Endothelial cell of umbilical vein (primary cell): ENCODE measurements at regions of chr20 and their contacts with region 1.

Region 1: DNA sequence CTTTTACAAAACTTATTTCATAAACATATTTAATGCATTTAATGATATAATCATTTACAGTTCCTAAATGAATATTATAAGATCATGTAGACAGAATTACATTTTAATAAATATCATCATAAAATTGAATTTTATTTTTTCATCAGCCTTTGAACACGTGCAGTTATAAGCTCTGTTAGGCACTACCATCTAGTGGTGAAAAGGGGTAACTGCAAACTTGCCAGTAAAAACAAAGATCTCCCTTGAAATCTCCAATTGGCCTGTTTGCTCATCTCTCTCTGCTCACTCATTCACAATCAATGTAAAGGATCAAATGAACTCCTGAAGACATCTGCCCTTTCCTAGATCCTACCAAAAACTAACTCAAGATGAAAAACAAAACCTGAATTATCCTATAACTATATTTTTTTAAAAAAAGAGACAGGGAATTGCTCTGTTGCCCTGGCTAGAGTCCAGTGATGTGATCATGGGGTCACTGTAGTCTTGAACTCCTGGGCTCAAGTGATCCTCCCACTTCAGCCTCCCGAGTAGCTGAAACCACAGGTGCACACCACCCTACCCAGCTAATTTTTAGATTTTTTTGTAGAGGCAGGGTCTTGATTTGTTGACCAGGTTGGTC is 31.7 kb downstream of the SAMHD1 start:
- DNase-seq: peak; percentile 67
- H3K4me3 ChIP-seq: no peak overlapping the region
- H3K27ac ChIP-seq: no peak overlapping the region
- H3K4me1 ChIP-seq: no peaks in the 10 kb centered on the region
- H3K27me3 ChIP-seq: no peaks in the 10 kb centered on the region
- CTCF ChIP-seq: peak; percentile 67 to 77
- POLR2A ChIP-seq: no peak

Region 2: DNA sequence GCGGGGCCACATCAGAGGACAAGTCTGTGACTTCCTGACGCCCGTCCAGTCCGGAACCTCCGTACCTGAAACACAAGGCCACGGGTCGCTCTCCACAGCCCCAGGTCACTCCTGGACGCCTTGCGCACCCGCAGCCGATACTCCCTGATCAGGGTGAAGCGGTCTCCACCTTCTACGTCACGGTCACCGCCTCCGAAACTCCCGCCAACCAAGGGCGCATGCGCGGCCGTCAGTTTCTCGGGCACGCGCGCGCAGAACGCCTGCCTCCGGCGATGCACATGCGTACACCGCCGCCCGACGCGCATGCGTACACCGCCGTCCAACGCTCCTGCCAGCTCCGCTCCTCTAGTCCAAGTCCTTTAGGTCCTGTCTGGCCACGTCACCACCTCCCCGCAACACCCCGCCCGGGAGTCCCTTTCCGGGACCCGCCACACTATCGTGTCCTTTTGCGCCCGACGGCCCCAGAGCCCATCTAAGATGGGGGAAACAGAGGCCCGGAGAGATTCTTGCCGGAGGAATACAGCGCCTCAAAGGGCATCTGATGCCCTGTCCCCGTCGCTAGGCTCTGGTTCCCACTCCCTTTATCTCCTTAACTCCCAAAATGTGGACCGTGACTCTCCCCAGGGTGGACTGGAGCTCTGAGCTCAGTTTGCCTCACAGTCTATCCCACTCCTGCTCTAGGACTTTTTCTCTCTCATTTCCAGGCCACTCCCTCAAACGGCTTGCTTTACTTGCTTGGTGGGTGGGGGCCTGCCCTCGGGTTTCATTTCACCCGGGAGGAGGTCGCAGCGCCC is 146.0 kb before region 1 on chr20 and contains the start of gene DSN1:
- CTCF ChIA-PET with region 1: interaction called, 10 read pairs
- POLR2A ChIA-PET with region 1: no interaction called
- dilution Hi-C with region 1: no loop called
- intact Hi-C with region 1: no loop called
- DNase-seq: peak; percentile 99
- H3K4me3 ChIP-seq: peak within 1 kb of the TSS; percentile 53 to 90 (median 79)
- H3K27ac ChIP-seq: peak within 1 kb of the TSS; percentile 89
- H3K4me1 ChIP-seq: peaks cover 17% of the 10 kb centered on the region
- H3K27me3 ChIP-seq: no peaks in the 10 kb centered on the region
- CTCF ChIP-seq: peak in 1 of 2 donors; percentile 79
- POLR2A ChIP-seq: peak; percentile 86
- total RNA-seq, gene DSN1: 24.4 and 25.0 TPM in 2 replicates

Region 3: GRCh38 chr20:36932476-36933426 is 12.9 kb after region 1 on chr20:
- CTCF ChIA-PET with region 1: interaction called, 23 read pairs
- POLR2A ChIA-PET with region 1: no interaction called
- dilution Hi-C with region 1: no loop called
- intact Hi-C with region 1: no loop called
- DNase-seq: no peak
- H3K4me3 ChIP-seq: no peak overlapping the region
- H3K27ac ChIP-seq: no peak overlapping the region
- H3K4me1 ChIP-seq: no peaks in the 10 kb centered on the region
- H3K27me3 ChIP-seq: no peaks in the 10 kb centered on the region
- CTCF ChIP-seq: no peak
- POLR2A ChIP-seq: no peak

Region 4: GRCh38 chr20:36951198-36951976 is 31.6 kb after region 1 on chr20 and contains the start of gene SAMHD1:
- CTCF ChIA-PET with region 1: no interaction called
- POLR2A ChIA-PET with region 1: no interaction called
- dilution Hi-C with region 1: no loop called
- intact Hi-C with region 1: no loop called
- DNase-seq: peak; percentile 98
- H3K4me3 ChIP-seq: peak within 1 kb of the TSS; percentile 70 to 81 (median 76)
- H3K27ac ChIP-seq: no peak within 1 kb of the TSS
- H3K4me1 ChIP-seq: peaks cover 10% of the 10 kb centered on the region
- H3K27me3 ChIP-seq: no peaks in the 10 kb centered on the region
- CTCF ChIP-seq: peak in 1 of 2 donors; percentile 15
- POLR2A ChIP-seq: peak; percentile 70
- total RNA-seq, gene SAMHD1: 27.5 and 28.3 TPM in 2 replicates